Left ventricle myocardium inferior (tissue), 1 donor: ENCODE measurements at regions of chr3 and their contacts with region 1.

Region 1: DNA sequence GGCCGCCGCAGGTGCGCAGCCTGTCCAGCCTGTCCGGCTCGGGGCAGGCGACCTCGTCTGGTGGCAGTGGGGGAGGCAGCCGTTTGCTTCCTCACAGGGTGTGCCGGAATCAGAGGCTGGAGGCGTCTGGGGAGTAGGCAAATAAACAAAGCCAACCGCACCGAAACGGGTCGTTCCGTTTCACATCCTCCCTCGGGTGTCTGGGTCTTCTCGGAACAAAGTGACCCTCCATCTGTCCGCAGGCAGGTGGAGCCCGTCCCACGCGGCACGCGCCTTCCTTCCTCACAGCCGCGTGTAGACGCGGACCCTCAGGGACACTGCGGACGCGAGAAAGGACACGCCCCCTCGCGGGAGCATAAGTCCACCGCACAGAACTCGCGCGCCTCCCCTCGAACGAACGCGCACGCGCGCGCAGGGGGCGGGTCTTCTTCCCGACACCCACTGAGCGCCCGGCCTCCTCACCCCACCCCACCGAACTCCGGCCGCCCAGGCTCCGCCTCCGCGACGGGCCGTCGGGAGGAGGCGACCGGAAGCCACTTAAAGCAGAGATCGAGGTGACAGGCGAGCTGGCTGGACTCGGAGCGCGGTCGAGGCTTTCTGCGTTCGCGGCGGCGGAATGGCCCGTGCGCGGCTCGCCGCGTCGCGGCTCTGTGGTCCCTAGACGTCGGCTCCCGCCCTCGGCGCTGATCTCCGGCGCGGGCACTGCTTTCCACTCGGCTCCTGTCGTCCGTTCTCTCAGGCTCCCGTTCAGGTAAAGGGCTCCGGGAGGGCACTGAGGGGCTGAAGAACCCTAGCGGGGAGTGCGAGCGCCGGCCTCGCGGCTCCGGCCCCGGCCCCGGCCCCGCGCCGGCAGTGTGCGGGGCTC is at the start of gene TIPARP:
- DNase-seq: peak; percentile 100
- H3K4me3 ChIP-seq: peak within 1 kb of the TSS; percentile 81
- H3K27ac ChIP-seq: peak within 1 kb of the TSS; percentile 95
- H3K4me1 ChIP-seq: peaks cover 58% of the 10 kb centered on the region
- H3K27me3 ChIP-seq: no peaks in the 10 kb centered on the region
- CTCF ChIP-seq: peak; percentile 82
- total RNA-seq, gene TIPARP: 27.2 TPM

Region 2: DNA sequence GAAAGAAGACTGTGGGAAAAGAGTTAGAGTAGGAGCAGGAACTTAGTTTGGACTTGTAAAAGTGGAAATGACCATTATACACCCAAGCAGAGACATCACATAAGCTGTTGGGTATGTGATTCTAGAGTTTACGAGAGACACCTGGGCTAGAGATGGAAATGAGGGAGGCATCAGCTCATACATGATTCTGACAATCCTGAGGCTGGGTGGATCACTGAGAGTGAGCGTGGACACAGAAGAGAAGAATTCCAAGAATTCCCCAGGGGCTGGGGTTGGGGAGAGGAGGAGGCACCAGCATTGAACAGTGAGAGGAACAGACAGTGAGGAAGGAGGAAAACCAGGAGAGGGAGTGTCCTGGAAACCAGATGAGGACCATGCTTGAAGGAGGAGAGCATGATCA is 440.4 kb before region 1 on chr3:
- intact Hi-C with region 1: no loop called
- DNase-seq: no peak
- H3K4me3 ChIP-seq: no peak overlapping the region
- H3K27ac ChIP-seq: no peak overlapping the region
- H3K4me1 ChIP-seq: no peaks in the 10 kb centered on the region
- H3K27me3 ChIP-seq: no peaks in the 10 kb centered on the region
- CTCF ChIP-seq: no peak

Region 3: GRCh38 chr3:156474560-156475389 is 199.5 kb before region 1 on chr3:
- intact Hi-C with region 1: no loop called
- DNase-seq: no peak
- H3K4me3 ChIP-seq: no peak overlapping the region
- H3K27ac ChIP-seq: no peak overlapping the region
- H3K4me1 ChIP-seq: peaks cover 4% of the 10 kb centered on the region
- H3K27me3 ChIP-seq: no peaks in the 10 kb centered on the region
- CTCF ChIP-seq: peak; percentile 48

Region 4: GRCh38 chr3:156554842-156555687 is 119.2 kb before region 1 on chr3 and contains the start of gene SSR3:
- intact Hi-C with region 1: loop called (anchors 10 kb)
- DNase-seq: peak; percentile 99
- H3K4me3 ChIP-seq: peak within 1 kb of the TSS; percentile 90
- H3K27ac ChIP-seq: peak within 1 kb of the TSS; percentile 96
- H3K4me1 ChIP-seq: peaks cover 68% of the 10 kb centered on the region
- H3K27me3 ChIP-seq: no peaks in the 10 kb centered on the region
- CTCF ChIP-seq: peak; percentile 57
- total RNA-seq, gene SSR3: 208 TPM

Region 5: DNA sequence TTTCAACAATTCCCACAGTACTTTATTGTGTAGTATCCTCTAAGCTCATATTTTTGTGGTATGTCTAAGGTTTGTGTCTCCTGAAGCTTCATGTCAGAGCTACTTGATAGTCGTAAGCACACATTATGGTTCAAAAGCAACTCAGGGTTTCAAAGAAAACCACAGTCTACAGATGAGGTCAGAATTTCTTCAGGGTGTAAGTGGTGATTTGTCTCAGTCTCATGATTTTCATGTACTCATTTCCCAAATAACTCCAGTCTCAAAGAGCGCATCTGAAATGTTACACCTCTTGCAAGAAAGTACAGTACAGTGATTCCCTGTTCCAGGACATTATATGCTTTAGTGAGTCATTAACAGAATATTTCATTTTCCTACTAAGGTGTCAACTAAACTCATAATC is 71.9 kb before region 1 on chr3:
- intact Hi-C with region 1: no loop called
- DNase-seq: no peak
- H3K4me3 ChIP-seq: no peak overlapping the region
- H3K27ac ChIP-seq: no peak overlapping the region
- H3K4me1 ChIP-seq: peaks cover 36% of the 10 kb centered on the region
- H3K27me3 ChIP-seq: no peaks in the 10 kb centered on the region
- CTCF ChIP-seq: no peak

Region 6: GRCh38 chr3:156826144-156826895 is 152.0 kb after region 1 on chr3 and contains the start of gene LEKR1:
- intact Hi-C with region 1: no loop called
- DNase-seq: peak; percentile 91
- H3K4me3 ChIP-seq: peak within 1 kb of the TSS; percentile 78
- H3K27ac ChIP-seq: peak within 1 kb of the TSS; percentile 91
- H3K4me1 ChIP-seq: peaks cover 25% of the 10 kb centered on the region
- H3K27me3 ChIP-seq: no peaks in the 10 kb centered on the region
- CTCF ChIP-seq: peak; percentile 6
- total RNA-seq, gene LEKR1: 0.71 TPM

Region 7: GRCh38 chr3:157081681-157082210 is 407.5 kb after region 1 on chr3:
- intact Hi-C with region 1: loop called (anchors 5 kb)
- DNase-seq: peak; percentile 88
- H3K4me3 ChIP-seq: no peak overlapping the region
- H3K27ac ChIP-seq: no peak overlapping the region
- H3K4me1 ChIP-seq: peaks cover 32% of the 10 kb centered on the region
- H3K27me3 ChIP-seq: no peaks in the 10 kb centered on the region
- CTCF ChIP-seq: peak; percentile 96

Region 8: GRCh38 chr3:157136647-157137387 is 462.5 kb after region 1 on chr3:
- intact Hi-C with region 1: loop called (anchors 5 kb)
- DNase-seq: no peak
- H3K4me3 ChIP-seq: no peak overlapping the region
- H3K27ac ChIP-seq: peak overlapping the region; percentile 82
- H3K4me1 ChIP-seq: peaks cover 64% of the 10 kb centered on the region
- H3K27me3 ChIP-seq: no peaks in the 10 kb centered on the region
- CTCF ChIP-seq: no peak